A549 (cell line): ENCODE measurements at regions of chr7 and their contacts with region 1.

Region 1: DNA sequence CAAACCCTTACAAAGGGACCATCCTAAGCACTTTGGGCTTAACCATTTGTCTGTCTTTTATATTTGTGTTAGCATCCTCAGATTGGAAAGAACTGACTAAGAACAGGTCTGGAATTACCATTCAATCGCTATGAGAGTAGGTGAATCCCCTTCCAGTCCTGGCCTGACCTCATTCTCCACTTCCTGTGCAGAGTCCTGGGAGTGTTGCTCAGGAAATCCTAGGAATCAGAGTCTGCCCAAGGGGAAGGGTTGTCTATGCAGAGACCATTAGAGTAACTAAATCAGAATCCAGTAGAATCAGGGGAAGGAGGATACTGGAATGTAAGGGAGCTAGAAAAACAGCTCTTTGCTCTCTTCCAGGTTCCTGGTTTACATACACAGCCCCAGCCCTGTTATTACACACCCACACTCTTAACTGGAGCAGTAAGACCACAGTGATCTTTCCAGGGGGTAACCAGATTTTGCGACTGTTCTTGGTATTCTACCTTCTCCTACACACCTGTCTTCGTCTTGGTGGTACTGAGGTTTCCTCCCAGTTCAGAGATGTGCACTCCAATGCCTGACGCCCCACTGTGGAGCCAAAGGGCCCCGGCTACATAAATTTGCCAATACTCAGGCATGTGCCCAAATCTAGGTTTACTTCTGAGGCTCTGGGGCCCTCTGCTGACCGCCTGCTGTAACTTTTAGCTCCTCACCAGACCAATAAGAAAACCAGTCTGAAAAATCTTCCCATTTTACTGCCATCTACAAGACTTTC is 103.7 kb downstream of the RNF216 start:
- DNase-seq: peak; percentile 55 to 70
- ATAC-seq: peak; percentile 89 to 90
- H3K4me3 ChIP-seq: no peak overlapping the region
- H3K27ac ChIP-seq: peak overlapping the region; percentile 21 to 54; a peak in 4 of 6 replicates
- H3K4me1 ChIP-seq: peaks cover 13% of the 10 kb centered on the region
- CTCF ChIP-seq: peak; percentile 77
- EP300 ChIP-seq: no peak
- POLR2A ChIP-seq: no peak
- RAD21 ChIP-seq: peak; percentile 81 to 86

Region 2: DNA sequence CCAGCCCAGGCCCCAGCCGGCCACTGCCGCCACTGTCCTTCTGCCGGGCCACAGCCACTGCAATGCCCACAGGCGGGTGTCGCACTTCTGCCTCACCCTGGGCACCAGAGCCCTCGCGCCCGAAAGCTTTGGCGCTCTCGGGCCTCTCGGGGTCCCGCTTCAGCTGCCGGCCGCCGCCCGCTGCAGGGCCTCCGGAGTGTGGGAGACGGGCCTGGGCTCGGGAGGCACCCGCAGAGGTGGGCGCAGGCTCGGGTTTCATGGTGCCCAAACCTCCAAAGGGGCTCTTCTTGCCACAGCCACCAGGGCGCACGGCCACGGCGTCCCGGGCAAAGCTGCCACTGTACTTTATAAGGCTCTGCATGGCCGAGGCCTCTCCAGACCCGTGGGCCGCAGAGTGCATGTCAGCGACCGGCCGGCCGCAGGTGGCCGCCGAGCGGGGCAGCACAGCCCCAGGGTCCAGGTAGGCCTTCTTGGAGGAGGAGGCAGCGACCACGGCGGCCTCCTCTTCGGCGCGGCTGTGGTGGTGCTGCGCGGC is 289.9 kb before region 1 on chr7:
- CTCF ChIA-PET with region 1: no interaction called
- POLR2A ChIA-PET with region 1: no interaction called
- DNase-seq: no peak
- ATAC-seq: no peak; a peak in 1 of 6 replicates
- H3K4me3 ChIP-seq: no peak overlapping the region
- H3K27ac ChIP-seq: no peak overlapping the region
- H3K4me1 ChIP-seq: peaks cover 6% of the 10 kb centered on the region; the same call in 1 of the 3 replicates
- CTCF ChIP-seq: no peak
- EP300 ChIP-seq: no peak
- POLR2A ChIP-seq: no peak
- RAD21 ChIP-seq: no peak

Region 3: GRCh38 chr7:5603241-5604140 is 74.2 kb before region 1 on chr7:
- CTCF ChIA-PET with region 1: no interaction called
- POLR2A ChIA-PET with region 1: no interaction called
- DNase-seq: no peak
- ATAC-seq: no peak
- H3K4me3 ChIP-seq: no peak overlapping the region
- H3K27ac ChIP-seq: no peak overlapping the region
- H3K4me1 ChIP-seq: peaks cover 12% of the 10 kb centered on the region
- CTCF ChIP-seq: no peak
- EP300 ChIP-seq: no peak
- POLR2A ChIP-seq: no peak
- RAD21 ChIP-seq: no peak

Region 4: DNA sequence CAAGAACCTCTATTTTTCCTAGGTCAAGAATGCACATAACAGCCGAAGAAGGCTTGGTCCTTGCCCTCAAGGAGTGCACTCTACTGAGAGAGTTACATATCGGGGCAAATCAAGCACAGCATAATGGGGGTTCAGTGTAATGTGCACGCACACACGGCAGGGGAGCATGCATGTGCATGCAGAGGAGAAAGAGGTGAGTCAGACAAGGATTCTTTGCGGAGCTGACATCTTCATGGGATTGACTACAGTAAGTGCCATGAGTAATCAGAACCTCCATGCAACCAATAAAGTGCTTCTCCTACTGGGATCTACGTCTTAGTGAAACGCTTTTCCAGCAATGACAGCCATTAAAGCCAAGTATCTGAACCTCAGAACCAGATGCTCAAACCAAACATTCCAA is 19.8 kb before region 1 on chr7:
- CTCF ChIA-PET with region 1: interaction called, 190 read pairs
- POLR2A ChIA-PET with region 1: no interaction called
- DNase-seq: no peak
- ATAC-seq: no peak
- H3K4me3 ChIP-seq: no peak overlapping the region
- H3K27ac ChIP-seq: no peak overlapping the region
- H3K4me1 ChIP-seq: no peaks in the 10 kb centered on the region
- CTCF ChIP-seq: no peak
- EP300 ChIP-seq: no peak
- POLR2A ChIP-seq: no peak
- RAD21 ChIP-seq: no peak

Region 5: GRCh38 chr7:5694912-5695726 is 17.4 kb after region 1 on chr7:
- CTCF ChIA-PET with region 1: interaction called, 164 read pairs
- POLR2A ChIA-PET with region 1: interaction called, 3 read pairs
- DNase-seq: no peak
- ATAC-seq: no peak
- H3K4me3 ChIP-seq: no peak overlapping the region
- H3K27ac ChIP-seq: peak overlapping the region; percentile 86 to 95; a peak in 5 of 6 replicates
- H3K4me1 ChIP-seq: peaks cover 46% of the 10 kb centered on the region
- CTCF ChIP-seq: no peak
- EP300 ChIP-seq: no peak
- POLR2A ChIP-seq: no peak
- RAD21 ChIP-seq: no peak

Region 6: DNA sequence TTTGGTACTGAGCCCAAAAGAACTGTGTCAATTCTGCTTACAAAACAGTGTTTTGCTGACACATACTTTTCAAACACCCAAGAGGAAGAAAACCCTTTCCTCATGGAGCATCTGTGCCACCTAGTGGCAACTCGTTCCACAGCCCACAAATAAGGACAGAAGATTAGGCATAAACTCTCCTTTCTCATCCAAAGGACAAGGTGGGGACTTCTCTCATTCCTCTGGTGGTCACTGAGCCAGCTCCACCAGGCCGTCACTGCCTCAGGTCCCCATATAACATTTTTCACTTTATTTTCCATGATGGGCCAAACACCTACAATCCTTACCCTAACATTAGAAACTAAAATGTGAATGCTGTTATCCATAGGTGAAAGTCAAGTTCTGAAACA is 26.8 kb after region 1 on chr7:
- CTCF ChIA-PET with region 1: interaction called, 164 read pairs
- POLR2A ChIA-PET with region 1: no interaction called
- DNase-seq: peak; percentile 71 to 77
- ATAC-seq: peak; percentile 87 to 89
- H3K4me3 ChIP-seq: no peak overlapping the region
- H3K27ac ChIP-seq: peak overlapping the region in 1 of 2 experiments; percentile 41; a peak in 4 of 6 replicates
- H3K4me1 ChIP-seq: peaks cover 38% of the 10 kb centered on the region
- CTCF ChIP-seq: peak; percentile 97
- EP300 ChIP-seq: no peak
- POLR2A ChIP-seq: no peak
- RAD21 ChIP-seq: peak; percentile 92 to 96